Cardiac septum (tissue), 1 donor: ENCODE measurements at regions of chr3 and their contacts with region 1.

Region 1: DNA sequence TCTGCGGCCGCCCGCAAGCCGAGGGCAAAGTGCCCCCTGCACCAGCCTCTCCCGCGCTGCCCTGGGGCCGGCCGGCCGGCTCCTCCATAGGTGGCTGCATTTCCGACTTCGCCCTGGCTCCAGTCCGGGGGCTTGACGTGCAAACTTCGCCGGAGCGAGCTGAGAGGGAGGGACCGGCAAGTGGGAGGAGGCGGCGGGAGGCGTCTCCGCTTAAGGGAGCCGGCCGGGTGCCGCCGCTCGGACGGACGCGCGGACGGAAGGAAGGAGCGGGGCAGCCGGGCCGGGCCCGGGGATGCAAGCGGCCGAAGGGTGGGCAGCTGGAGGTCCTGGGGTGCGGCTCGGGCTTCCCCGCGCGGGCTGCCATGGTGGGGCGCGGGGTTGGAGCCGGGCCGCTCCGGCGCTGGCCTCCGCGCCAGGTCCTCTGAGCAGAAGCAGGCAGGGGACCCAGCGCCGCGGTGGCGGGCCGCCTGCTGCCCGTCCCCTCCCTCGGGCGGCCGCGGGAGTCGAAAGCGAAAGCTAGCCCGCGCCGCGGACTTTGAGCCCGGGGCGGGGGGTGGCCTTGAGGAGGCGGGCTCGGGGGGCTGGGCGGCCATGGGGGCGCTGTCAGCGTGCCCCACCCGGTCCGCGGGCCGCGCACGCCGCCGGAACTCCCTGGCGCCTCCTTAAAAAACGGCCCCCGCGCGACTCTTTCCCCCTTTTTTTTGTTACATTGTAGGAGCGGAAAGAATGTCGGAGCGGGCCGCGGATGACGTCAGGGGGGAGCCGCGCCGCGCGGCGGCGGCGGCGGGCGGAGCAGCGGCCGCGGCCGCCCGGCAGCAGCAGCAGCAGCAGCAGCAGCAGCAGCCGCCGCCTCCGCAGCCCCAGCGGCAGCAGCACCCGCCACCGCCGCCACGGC is at the start of gene SCAANT1:
- DNase-seq: peak; percentile 95
- total RNA-seq, gene SCAANT1: not detected

Region 2: GRCh38 chr3:63863148-63864007 is 48.7 kb before region 1 on chr3 and contains the starts of genes ATXN7 and THOC7:
- intact Hi-C with region 1: loop called (anchors 1 kb)
- DNase-seq: peak; percentile 87
- total RNA-seq, gene ATXN7: 26.4 TPM
- total RNA-seq, gene THOC7: 74.3 TPM

Region 3: GRCh38 chr3:63961891-63962290 is 49.8 kb after region 1 on chr3:
- intact Hi-C with region 1: loop called (anchors 5 kb)
- DNase-seq: no peak

Region 4: DNA sequence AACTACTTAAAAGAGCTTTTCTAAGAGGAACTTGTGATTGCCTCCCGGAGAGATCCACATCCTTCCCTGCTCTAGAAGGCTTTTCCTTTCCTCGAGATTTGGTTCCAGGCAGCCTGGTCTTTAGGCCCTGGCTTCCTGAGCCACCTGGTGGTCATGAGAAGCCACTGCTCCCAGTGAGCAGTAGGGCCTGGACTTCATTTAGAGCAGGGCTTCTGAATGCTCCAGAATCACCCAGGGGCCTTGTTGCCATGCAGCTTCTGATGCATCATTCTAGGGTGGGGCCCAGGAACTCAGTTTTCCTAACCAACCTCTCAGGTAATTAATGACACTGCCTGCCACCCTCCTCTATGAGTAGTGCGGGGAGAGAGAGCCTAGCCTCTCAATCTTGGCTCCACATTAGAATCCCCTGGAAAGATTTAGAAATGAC is 81.5 kb after region 1 on chr3:
- intact Hi-C with region 1: loop called (anchors 5 kb)
- DNase-seq: no peak

Region 5: GRCh38 chr3:64616953-64617352 is 704.8 kb after region 1 on chr3:
- intact Hi-C with region 1: no loop called
- DNase-seq: no peak